ENCODE measurements at regions of chr16 and their contacts with region 1.

Region 1: GRCh38 chr16:66872943-66873684 is 7.2 kb upstream of the PDP2 start:
- DNase-seq: peak; percentile 89
- H3K4me3 ChIP-seq: peak overlapping the region; percentile 12 to 59
- H3K27ac ChIP-seq: peak overlapping the region in 1 of 2 experiments; percentile 55; a peak in 1 of 4 replicates
- H3K4me1 ChIP-seq: peaks cover 3 to 5% of the 10 kb centered on the region in 2 experiments; a peak in 3 of 4 replicates
- H3K27me3 ChIP-seq: no peaks in the 10 kb centered on the region
- CTCF ChIP-seq: peak; percentile 97
- EP300 ChIP-seq: peak in 1 of 2 experiments; percentile 45; a peak in 1 of 4 replicates
- RAD21 ChIP-seq: peak; percentile 54

Region 2: GRCh38 chr16:65274566-65274965 is 1598.5 kb before region 1 on chr16:
- CTCF ChIA-PET with region 1: no interaction called
- POLR2A ChIA-PET with region 1: no interaction called
- DNase-seq: no peak
- H3K4me3 ChIP-seq: no peak overlapping the region
- H3K27ac ChIP-seq: no peak overlapping the region
- H3K4me1 ChIP-seq: peaks cover 0 to 6% of the 10 kb centered on the region in 2 experiments; a peak in 1 of 4 replicates
- H3K27me3 ChIP-seq: no peaks in the 10 kb centered on the region
- CTCF ChIP-seq: no peak
- EP300 ChIP-seq: no peak
- RAD21 ChIP-seq: no peak

Region 3: DNA sequence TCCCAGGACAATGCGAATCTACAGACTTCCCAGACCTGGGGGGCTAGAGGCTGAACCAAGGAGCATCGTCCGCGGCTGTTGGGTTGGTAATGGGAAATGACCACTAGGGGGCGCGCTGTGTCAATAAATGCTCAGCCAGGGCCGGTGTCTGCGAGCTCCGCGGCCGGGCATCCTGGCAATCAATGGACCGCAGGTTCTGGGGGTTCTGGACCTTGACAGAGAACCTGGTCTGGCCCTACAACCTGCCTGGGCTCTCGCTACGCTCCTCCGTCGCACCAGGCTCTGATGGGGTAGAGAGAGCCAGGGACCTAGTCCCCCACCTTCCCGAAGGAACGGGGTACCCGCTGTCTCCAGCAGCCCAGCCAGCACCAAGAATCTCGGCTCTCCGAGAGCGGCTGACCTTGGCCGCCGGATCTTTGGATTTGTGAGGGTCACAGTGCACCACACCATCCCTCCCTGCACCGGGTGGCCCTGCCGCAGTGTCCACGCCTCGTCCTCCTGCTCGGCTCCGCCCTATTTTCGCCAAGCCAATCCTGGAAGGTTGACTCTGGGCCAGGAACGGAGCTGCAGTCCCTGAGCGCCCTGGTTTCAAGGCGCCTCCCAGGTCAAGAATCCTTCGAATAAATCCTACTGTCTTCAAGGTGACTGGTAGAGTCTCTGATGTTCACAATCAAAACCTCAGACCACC is 466.4 kb before region 1 on chr16:
- CTCF ChIA-PET with region 1: interaction called, 22 read pairs
- POLR2A ChIA-PET with region 1: no interaction called
- DNase-seq: peak; percentile 90
- H3K4me3 ChIP-seq: peak overlapping the region; percentile 77 to 82
- H3K27ac ChIP-seq: peak overlapping the region; percentile 56 to 60
- H3K4me1 ChIP-seq: peaks cover 6 to 15% of the 10 kb centered on the region in 2 experiments; a peak in 3 of 4 replicates
- H3K27me3 ChIP-seq: no peaks in the 10 kb centered on the region
- CTCF ChIP-seq: peak; percentile 84
- EP300 ChIP-seq: no peak
- RAD21 ChIP-seq: peak; percentile 93

Region 4: DNA sequence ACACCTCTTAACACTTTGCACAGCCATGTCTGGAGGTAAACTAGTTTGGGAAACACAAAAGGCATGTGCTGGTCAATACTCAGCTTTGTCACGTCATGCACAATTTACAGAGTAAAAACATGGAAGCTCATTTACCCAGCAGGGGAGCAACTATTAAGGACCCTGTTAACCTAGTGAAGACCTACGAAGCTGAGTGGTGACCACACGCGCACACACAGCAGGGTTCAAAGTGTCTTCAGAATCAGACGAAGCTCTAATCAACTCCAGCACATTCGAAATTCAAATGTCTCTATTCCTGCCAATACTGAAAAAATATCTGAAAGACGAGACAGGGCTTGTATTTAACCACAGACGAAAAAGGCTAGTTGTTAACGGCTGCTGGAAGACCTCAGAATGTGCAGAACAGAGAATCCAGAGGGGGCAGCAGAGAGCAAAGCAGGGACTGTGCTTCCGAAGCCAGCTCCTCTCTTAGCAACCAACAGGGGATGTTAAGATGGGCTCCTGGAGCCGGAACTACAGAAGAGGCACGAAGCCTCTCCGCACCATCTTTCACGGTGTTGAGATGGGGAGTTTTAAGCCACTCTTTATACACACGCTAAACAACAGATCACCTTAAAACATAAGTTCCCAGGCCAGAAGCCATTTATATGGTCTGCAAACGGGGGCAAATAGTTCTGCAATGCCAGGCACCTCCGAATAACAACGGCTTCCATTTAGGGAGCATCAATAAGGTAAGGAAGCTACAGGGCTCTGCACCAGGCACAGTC is 222.2 kb before region 1 on chr16:
- CTCF ChIA-PET with region 1: interaction called, 11 read pairs
- POLR2A ChIA-PET with region 1: no interaction called
- DNase-seq: peak; percentile 83
- H3K4me3 ChIP-seq: peak overlapping the region; percentile 38 to 46
- H3K27ac ChIP-seq: peak overlapping the region in 1 of 2 experiments; percentile 18; a peak in 1 of 4 replicates
- H3K4me1 ChIP-seq: peaks cover 4 to 6% of the 10 kb centered on the region in 2 experiments; a peak in 1 of 4 replicates
- H3K27me3 ChIP-seq: no peaks in the 10 kb centered on the region
- CTCF ChIP-seq: peak; percentile 94
- EP300 ChIP-seq: no peak
- RAD21 ChIP-seq: peak; percentile 71

Region 5: GRCh38 chr16:66728117-66728787 is 144.9 kb before region 1 on chr16:
- CTCF ChIA-PET with region 1: interaction called, 48 read pairs
- POLR2A ChIA-PET with region 1: interaction called, 7 read pairs
- DNase-seq: peak; percentile 59
- H3K4me3 ChIP-seq: no peak overlapping the region
- H3K27ac ChIP-seq: peak overlapping the region in 1 of 2 experiments; percentile 30; a peak in 1 of 4 replicates
- H3K4me1 ChIP-seq: no peaks in the 10 kb centered on the region
- H3K27me3 ChIP-seq: no peaks in the 10 kb centered on the region
- CTCF ChIP-seq: peak; percentile 75
- EP300 ChIP-seq: no peak
- RAD21 ChIP-seq: peak; percentile 63

Region 6: GRCh38 chr16:66830422-66831404 is 42.4 kb before region 1 on chr16 and contains the start of gene NAE1:
- CTCF ChIA-PET with region 1: interaction called, 83 read pairs
- POLR2A ChIA-PET with region 1: interaction called, 11 read pairs
- DNase-seq: peak; percentile 98
- H3K4me3 ChIP-seq: peak within 1 kb of the TSS; percentile 67 to 73
- H3K27ac ChIP-seq: peak within 1 kb of the TSS; percentile 64 to 81
- H3K4me1 ChIP-seq: peaks cover 4 to 7% of the 10 kb centered on the region in 2 experiments; a peak in 2 of 4 replicates
- H3K27me3 ChIP-seq: no peaks in the 10 kb centered on the region
- CTCF ChIP-seq: peak; percentile 86
- EP300 ChIP-seq: peak in 1 of 2 experiments; percentile 10; a peak in 1 of 4 replicates
- RAD21 ChIP-seq: peak; percentile 36; the same call in 1 of the 2 replicates
- polyA plus RNA-seq, gene NAE1: 33.8 and 45.5 TPM in 2 replicates

Region 7: DNA sequence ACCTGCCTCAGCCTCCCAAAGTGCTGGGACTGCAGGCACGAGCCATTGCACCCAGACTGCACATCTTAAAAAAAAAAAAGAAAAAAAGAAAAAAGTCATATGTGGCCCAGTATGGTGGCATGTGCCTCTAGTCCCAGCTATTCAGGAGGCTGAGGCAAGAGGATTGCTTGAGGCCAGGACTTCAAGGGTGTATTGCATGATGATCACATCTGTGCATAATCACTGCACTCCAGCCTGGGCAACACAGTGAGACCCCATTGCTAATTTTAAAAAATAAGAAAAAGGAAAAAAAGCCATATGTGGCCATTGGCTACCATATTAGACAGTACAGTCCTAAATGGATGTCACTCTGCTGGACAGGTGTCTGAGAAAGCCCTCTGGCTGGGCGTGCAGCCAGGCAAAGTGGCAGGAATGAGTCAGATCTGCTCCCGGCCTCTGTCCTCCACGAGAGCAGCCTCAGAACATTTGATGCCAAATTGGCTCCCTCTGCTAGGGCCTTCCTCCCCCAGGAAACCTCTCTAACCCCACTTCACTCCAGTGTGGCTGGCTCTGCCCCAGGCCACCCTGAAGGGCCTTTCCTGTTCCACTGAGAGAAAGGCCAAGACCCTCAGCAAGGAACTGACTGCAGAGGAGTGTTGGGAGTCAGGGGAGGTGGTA is 14.2 kb before region 1 on chr16:
- CTCF ChIA-PET with region 1: interaction called, 39 read pairs
- POLR2A ChIA-PET with region 1: no interaction called
- DNase-seq: peak; percentile 19
- H3K4me3 ChIP-seq: no peak overlapping the region
- H3K27ac ChIP-seq: no peak overlapping the region; a peak in 1 of 4 replicates
- H3K4me1 ChIP-seq: peaks cover 7 to 12% of the 10 kb centered on the region in 2 experiments; a peak in 2 of 4 replicates
- H3K27me3 ChIP-seq: no peaks in the 10 kb centered on the region
- CTCF ChIP-seq: no peak
- EP300 ChIP-seq: no peak
- RAD21 ChIP-seq: no peak